ENCODE measurements at regions of chr14 and their contacts with region 1.

Region 1: GRCh38 chr14:61188978-61189808 is 91.9 kb downstream of the TMEM30B start:
- DNase-seq: peak; percentile 39 to 78 (median 56)
- ATAC-seq: peak; percentile 56 to 89 (median 84)
- H3K4me3 ChIP-seq: peak overlapping the region in 11 of 12 donors; percentile 2 to 61 (median 47)
- H3K27ac ChIP-seq: peak overlapping the region in 9 of 12 donors; percentile 15 to 79 (median 52)
- H3K4me1 ChIP-seq: peaks cover 0 to 17% (median 3%) of the 10 kb centered on the region in 12 donors
- H3K27me3 ChIP-seq: peaks cover 0 to 40% (median 8%) of the 10 kb centered on the region in 9 donors
- CTCF ChIP-seq: peak; percentile 12 to 69 (median 38)
- POLR2A ChIP-seq: no peak

Region 2: DNA sequence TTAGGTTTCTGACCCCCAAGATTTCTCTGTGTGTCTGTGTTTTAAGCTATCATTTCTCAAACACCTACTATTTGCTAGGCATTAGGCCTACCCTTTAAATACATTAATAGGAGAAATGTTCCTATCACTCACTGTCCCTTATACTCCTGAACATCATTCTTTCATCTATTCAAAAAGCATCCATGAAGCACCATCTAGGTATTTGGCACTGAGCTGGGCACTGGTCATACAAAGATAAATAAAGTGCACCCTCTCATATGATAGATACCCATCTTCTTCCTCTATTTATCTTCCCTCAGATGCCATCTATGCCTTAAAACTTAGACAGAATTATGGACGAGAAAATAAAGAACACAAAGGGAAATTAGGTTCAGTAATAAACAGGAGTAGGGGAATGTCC is 560.3 kb before region 1 on chr14:
- intact Hi-C with region 1: loop called in 1 of 10 experiments (anchors 5 kb)
- DNase-seq: no peak
- ATAC-seq: no peak
- H3K4me3 ChIP-seq: no peak overlapping the region
- H3K27ac ChIP-seq: no peak overlapping the region
- H3K4me1 ChIP-seq: no peaks in the 10 kb centered on the region
- H3K27me3 ChIP-seq: peaks cover 0 to 52% (median 4%) of the 10 kb centered on the region in 9 donors
- CTCF ChIP-seq: no peak
- POLR2A ChIP-seq: no peak

Region 3: GRCh38 chr14:61153431-61153830 is 35.8 kb before region 1 on chr14:
- intact Hi-C with region 1: no loop called
- DNase-seq: no peak
- ATAC-seq: peak in 2 of 4 donors; percentile 37 to 50
- H3K4me3 ChIP-seq: no peak overlapping the region
- H3K27ac ChIP-seq: peak overlapping the region in 4 of 12 donors; percentile 2 to 20 (median 8)
- H3K4me1 ChIP-seq: peaks cover 0 to 11% (median 0%) of the 10 kb centered on the region in 12 donors
- H3K27me3 ChIP-seq: no peaks in the 10 kb centered on the region
- CTCF ChIP-seq: no peak
- POLR2A ChIP-seq: no peak